Activated CD4-positive, alpha-beta memory T cell treated with anti-CD3 and anti-CD28 coated beads for 36 hours (primary cell): ENCODE measurements at regions of chr12 and their contacts with region 1.

Region 1: GRCh38 chr12:132887513-132888351 is at the start of gene CHFR:
- DNase-seq: peak; percentile 98
- H3K4me3 Mint-ChIP-seq: peak within 1 kb of the TSS; percentile 99
- H3K27ac Mint-ChIP-seq: peak within 1 kb of the TSS; percentile 100
- H3K4me1 Mint-ChIP-seq: peaks cover 17% of the 10 kb centered on the region
- H3K27me3 Mint-ChIP-seq: no peaks in the 10 kb centered on the region
- total RNA-seq, gene CHFR: 41.2 to 42.9 TPM

Region 2: GRCh38 chr12:132828706-132829534 is 58.8 kb before region 1 on chr12 and contains the start of gene GOLGA3:
- CTCF ChIA-PET with region 1: no interaction called
- POLR2A ChIA-PET with region 1: no interaction called
- intact Hi-C with region 1: loop called (anchors 1 kb)
- DNase-seq: peak; percentile 96
- H3K4me3 Mint-ChIP-seq: peak within 1 kb of the TSS; percentile 96
- H3K27ac Mint-ChIP-seq: peak within 1 kb of the TSS; percentile 100
- H3K4me1 Mint-ChIP-seq: peaks cover 50% of the 10 kb centered on the region
- H3K27me3 Mint-ChIP-seq: no peaks in the 10 kb centered on the region
- total RNA-seq, gene GOLGA3: 41.7 to 44.2 TPM

Region 3: DNA sequence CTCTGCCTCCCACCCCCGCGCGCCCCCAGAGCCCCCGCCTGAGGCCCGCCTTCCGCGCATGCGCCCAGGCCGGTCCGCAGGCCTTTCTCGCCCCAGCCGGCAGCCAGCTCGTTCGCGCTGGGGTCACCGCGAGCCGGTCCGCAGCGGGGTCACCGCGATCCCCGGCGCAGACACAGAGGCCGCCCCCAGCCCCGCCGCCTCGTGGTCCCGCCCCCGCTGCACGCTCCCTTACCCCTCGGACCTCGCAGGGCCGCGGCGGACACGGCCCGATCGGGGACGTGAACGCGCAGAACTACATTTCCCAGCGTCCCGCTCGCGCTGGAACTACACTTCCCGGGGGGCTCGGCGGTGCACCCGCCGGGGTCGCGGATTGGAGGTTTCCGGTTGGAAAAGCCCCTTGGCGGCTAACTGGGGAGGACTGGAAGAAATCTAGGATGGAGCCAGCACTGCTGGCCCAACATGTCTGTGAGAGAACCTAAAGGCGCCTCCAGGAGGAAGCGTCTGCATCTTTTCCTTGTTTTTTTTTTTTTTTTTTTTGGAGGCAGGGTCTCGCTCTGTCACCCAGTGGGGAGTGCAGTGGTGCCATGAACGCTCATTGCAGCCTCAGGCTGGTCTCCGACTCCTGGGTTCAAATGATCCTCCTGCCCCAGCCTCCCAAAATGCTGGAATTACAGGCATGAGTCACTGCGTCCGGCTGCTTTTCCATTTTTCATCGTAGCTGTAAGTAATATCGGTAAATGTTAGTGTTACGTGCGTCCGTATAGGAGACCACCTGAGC is 68.5 kb after region 1 on chr12 and contains the start of gene ZNF605:
- CTCF ChIA-PET with region 1: no interaction called
- POLR2A ChIA-PET with region 1: no interaction called
- intact Hi-C with region 1: loop called (anchors 1 kb)
- DNase-seq: peak; percentile 93
- H3K4me3 Mint-ChIP-seq: peak within 1 kb of the TSS; percentile 88
- H3K27ac Mint-ChIP-seq: peak within 1 kb of the TSS; percentile 89
- H3K4me1 Mint-ChIP-seq: peaks cover 31% of the 10 kb centered on the region
- H3K27me3 Mint-ChIP-seq: no peaks in the 10 kb centered on the region
- total RNA-seq, gene ZNF605: 4.6 to 5.3 TPM

Region 4: DNA sequence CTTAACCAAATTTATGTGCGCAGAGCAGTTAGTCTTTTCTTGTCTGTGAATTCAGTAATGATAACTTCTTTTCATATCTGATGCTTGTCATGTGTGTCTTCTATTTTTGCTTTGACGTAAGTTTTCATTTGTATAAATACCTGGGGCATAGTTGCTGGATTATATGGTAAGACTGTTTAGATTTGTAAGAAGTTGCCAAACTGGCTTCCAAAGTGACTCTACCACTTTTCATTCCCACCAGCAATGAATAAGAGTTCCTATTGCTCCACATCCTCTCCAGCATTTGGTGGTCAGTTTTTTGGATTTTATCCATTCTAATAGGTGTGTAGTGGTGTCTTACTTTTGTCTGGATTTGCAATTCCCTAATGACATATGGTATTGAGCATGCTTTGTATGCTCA is 302.4 kb after region 1 on chr12:
- CTCF ChIA-PET with region 1: no interaction called
- POLR2A ChIA-PET with region 1: no interaction called
- intact Hi-C with region 1: no loop called
- DNase-seq: no peak
- H3K4me3 Mint-ChIP-seq: no peak overlapping the region
- H3K27ac Mint-ChIP-seq: no peak overlapping the region
- H3K4me1 Mint-ChIP-seq: no peaks in the 10 kb centered on the region
- H3K27me3 Mint-ChIP-seq: no peaks in the 10 kb centered on the region